ENCODE measurements at regions of chr7 and their contacts with region 1.

Region 1: DNA sequence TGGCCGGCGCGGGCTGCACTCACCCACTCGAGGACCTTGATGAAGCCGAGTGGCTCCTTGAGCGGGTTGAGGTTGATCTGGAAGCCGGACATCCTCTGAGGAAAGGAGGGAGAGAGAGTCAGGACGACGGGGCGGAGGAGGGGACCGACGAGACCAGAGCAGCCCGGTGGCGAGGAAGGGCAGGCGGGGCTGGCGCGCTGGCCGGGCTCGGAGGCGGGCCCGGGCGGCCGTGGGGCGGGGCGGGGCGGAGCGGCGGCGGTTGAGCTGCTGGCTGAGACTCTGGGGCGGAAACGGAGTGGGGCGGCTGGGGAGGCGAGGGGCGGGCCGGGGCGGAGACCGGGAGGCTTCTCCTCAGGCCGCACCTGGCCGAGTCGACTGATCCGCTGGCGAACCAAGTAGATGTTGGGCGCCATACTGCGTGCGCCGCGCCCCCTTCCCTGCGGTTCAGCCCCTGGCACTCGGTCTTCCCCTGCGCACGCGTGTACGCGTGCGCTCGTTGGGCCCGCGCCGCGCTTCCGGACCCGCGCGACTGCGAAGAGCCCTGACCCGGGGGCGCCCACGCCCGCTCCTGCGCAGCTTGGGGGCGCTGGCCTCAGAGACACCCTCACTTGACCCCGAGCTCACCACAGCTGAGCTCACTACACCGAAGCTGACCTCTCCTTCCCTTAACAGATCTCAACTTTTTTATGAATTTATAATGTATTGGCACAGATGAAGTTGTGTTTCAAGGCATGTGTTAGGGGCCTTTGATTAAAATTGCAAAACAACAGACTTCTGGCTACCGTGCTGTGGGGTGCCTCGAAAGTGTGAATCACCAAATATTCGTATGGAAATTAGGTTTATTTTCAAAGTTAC is at the start of gene SYPL1:
- DNase-seq: peak; percentile 86 to 97 (median 95)
- ATAC-seq: peak; percentile 88
- H3K4me3 ChIP-seq: peak within 1 kb of the TSS; percentile 64 to 69
- H3K4me3 Mint-ChIP-seq: peak within 1 kb of the TSS; percentile 89
- H3K27ac ChIP-seq: peak within 1 kb of the TSS; percentile 84 to 85
- H3K27ac Mint-ChIP-seq: peak within 1 kb of the TSS; percentile 96
- H3K4me1 ChIP-seq: peaks cover 71% of the 10 kb centered on the region
- H3K4me1 Mint-ChIP-seq: peaks cover 72% of the 10 kb centered on the region
- H3K27me3 ChIP-seq: no peaks in the 10 kb centered on the region
- H3K27me3 Mint-ChIP-seq: no peaks in the 10 kb centered on the region
- CTCF ChIP-seq: no peak
- total RNA-seq, gene SYPL1: 50.0 to 51.2 TPM

Region 2: DNA sequence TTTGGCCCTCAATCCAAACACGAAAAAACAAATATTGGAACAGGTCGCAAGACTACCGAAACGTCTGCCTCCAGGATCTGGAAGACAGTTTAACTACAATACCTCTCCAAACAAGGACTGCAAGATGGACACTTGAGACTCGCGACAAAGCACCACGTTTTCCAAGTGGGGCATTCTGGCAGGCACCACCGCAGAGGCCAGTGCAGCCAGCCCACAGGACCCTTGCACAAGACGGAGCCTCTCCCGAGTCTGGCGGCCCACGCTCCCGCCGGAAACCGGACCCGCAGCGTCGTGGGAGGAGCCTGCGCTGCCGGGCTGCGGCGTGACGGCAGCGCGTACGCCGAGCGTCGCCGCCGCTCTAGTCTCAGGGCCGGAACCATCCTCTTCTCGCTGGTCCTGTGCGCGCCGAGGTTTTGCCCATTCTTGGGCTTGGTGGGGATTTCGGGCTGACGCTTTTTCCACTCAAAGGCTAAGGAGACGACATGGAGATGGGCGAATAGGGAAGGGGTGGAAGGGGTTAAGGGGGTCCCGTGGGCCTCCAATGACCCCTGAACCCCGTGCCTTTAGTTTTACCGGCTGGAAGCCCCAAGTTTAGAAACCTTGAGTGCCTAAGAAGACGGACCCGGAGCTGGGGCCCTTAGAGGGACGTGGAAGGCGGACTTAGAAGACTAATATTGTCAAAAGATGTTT is 1904.5 kb before region 1 on chr7 and contains the start of gene ORC5:
- CTCF ChIA-PET with region 1: no interaction called
- POLR2A ChIA-PET with region 1: no interaction called
- intact Hi-C with region 1: loop called in 1 of 2 experiments (anchors 5 kb)
- DNase-seq: peak; percentile 41 to 90 (median 73)
- ATAC-seq: peak; percentile 95
- H3K4me3 ChIP-seq: peak within 1 kb of the TSS; percentile 85 to 87
- H3K4me3 Mint-ChIP-seq: peak within 1 kb of the TSS; percentile 92
- H3K27ac ChIP-seq: peak within 1 kb of the TSS; percentile 75 to 91
- H3K27ac Mint-ChIP-seq: peak within 1 kb of the TSS; percentile 95
- H3K4me1 ChIP-seq: peaks cover 17% of the 10 kb centered on the region
- H3K4me1 Mint-ChIP-seq: peaks cover 49% of the 10 kb centered on the region
- H3K27me3 ChIP-seq: no peaks in the 10 kb centered on the region
- H3K27me3 Mint-ChIP-seq: peaks cover 15% of the 10 kb centered on the region
- CTCF ChIP-seq: no peak
- total RNA-seq, gene ORC5: 9.7 to 11.3 TPM

Region 3: DNA sequence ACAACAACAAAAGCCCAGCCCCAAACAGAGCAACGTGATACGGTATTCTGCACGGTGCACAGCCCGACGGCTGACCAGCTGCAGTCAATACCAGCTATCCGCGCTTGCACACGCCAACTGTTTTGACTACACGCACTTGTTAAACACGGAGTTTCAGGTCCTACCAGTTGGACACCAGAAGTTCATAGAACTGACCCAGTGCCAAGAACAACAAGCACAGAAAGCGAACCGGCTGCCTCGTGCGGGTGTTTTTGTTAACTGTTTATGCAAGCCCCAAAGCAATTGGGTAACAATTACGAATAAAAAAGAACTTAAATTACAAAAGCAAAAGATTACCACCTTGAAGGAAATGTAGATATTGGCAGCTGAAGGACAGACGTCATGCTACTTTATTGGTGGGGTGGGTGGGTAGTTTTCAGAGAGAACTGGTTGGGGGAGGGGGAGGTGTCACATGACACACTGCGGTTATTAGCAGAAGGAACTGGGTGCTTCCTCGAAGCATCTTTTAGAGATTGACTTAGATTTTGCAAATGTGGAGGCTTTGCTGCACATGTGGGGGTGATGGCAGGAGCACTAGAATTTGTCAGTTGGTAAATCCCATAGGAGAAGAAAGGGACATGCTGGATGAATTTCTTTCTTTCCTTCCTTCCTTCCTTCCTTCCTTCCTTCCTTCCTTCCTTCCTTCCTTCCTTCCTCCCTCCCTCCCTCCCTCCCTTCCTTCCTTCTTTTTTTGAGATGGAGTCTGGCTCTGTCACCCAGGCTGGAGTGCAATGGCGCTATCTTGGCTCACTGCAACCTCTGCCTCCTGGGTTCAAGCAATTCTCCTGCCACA is 420.4 kb before region 1 on chr7:
- CTCF ChIA-PET with region 1: no interaction called
- POLR2A ChIA-PET with region 1: interaction called, 5 read pairs
- intact Hi-C with region 1: loop called in 1 of 2 experiments (anchors 5 kb)
- DNase-seq: peak; percentile 45 to 91 (median 71)
- ATAC-seq: peak; percentile 75
- H3K4me3 ChIP-seq: peak overlapping the region; percentile 69 to 72
- H3K4me3 Mint-ChIP-seq: peak overlapping the region; percentile 93
- H3K27ac ChIP-seq: peak overlapping the region; percentile 85 to 96
- H3K27ac Mint-ChIP-seq: peak overlapping the region; percentile 98
- H3K4me1 ChIP-seq: peaks cover 34% of the 10 kb centered on the region
- H3K4me1 Mint-ChIP-seq: peaks cover 64% of the 10 kb centered on the region
- H3K27me3 ChIP-seq: no peaks in the 10 kb centered on the region
- H3K27me3 Mint-ChIP-seq: no peaks in the 10 kb centered on the region
- CTCF ChIP-seq: no peak

Region 4: GRCh38 chr7:106071356-106071998 is 40.9 kb before region 1 on chr7:
- CTCF ChIA-PET with region 1: interaction called, 8 read pairs
- POLR2A ChIA-PET with region 1: interaction called, 50 read pairs
- intact Hi-C with region 1: loop called (anchors 2 to 5 kb)
- DNase-seq: peak in 8 of 9 experiments; percentile 22 to 81 (median 50)
- ATAC-seq: peak; percentile 92
- H3K4me3 ChIP-seq: peak overlapping the region; percentile 28 to 31
- H3K4me3 Mint-ChIP-seq: peak overlapping the region; percentile 78
- H3K27ac ChIP-seq: peak overlapping the region; percentile 64 to 83
- H3K27ac Mint-ChIP-seq: peak overlapping the region; percentile 97
- H3K4me1 ChIP-seq: peaks cover 37% of the 10 kb centered on the region
- H3K4me1 Mint-ChIP-seq: peaks cover 67% of the 10 kb centered on the region
- H3K27me3 ChIP-seq: no peaks in the 10 kb centered on the region
- H3K27me3 Mint-ChIP-seq: no peaks in the 10 kb centered on the region
- CTCF ChIP-seq: no peak

Region 5: GRCh38 chr7:106153891-106154449 is 41.6 kb after region 1 on chr7:
- CTCF ChIA-PET with region 1: interaction called, 22 read pairs
- POLR2A ChIA-PET with region 1: interaction called, 3 read pairs
- intact Hi-C with region 1: loop called in 1 of 2 experiments (anchors 2 kb)
- DNase-seq: peak; percentile 45 to 86 (median 72)
- ATAC-seq: peak; percentile 96
- H3K4me3 ChIP-seq: no peak overlapping the region
- H3K4me3 Mint-ChIP-seq: peak overlapping the region; percentile 48
- H3K27ac ChIP-seq: no peak overlapping the region
- H3K27ac Mint-ChIP-seq: no peak overlapping the region
- H3K4me1 ChIP-seq: no peaks in the 10 kb centered on the region
- H3K4me1 Mint-ChIP-seq: peaks cover 4% of the 10 kb centered on the region
- H3K27me3 ChIP-seq: no peaks in the 10 kb centered on the region
- H3K27me3 Mint-ChIP-seq: peaks cover 5% of the 10 kb centered on the region
- CTCF ChIP-seq: peak; percentile 93

Region 6: DNA sequence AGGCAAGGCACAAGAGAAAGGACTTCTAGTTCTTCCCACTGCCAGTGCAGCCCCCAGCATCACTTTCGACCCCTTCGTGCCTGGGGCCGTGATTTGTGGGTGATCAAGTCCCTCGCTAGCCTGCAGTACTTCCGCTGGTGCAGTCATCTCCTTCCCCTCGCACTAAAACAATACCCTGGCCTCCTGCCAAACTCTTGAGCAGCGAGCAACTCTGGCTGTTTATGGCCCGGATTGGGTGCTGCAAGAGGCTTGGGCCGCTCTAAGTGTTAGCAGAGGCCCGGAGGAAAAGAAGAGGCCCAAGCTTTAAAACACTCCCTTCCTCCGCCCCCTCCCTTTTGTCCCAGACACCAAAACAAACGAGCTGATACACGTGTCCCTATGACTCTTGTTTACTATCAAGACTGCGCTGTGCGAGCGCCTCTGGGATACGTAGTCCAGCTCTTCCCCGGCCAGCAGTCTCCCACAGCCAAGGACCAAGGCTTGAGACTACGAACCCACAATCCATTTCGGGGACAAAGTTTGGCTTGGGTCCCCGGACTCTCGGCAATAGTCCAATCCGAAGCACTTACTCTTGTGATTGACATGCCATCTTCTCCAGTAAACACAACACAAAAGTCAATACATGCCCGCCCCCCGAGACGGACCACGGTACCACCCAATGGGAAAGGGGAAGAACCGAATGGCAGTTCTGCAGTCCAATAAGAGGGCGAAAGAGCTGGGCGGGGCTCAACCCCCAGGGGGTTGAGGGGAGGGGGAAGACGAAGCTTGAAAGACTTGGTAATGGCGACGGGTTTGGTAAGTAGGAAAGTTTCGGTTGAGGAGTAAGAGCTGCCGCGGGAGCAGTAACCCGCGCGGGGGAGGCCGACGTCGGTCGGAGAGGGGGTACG is 1056.1 kb after region 1 on chr7 and contains the start of gene HBP1:
- CTCF ChIA-PET with region 1: no interaction called
- POLR2A ChIA-PET with region 1: interaction called, 9 read pairs
- intact Hi-C with region 1: loop called in 1 of 2 experiments (anchors 10 kb)
- DNase-seq: peak; percentile 95 to 100 (median 98)
- ATAC-seq: peak; percentile 77
- H3K4me3 ChIP-seq: peak within 1 kb of the TSS; percentile 85 to 93
- H3K4me3 Mint-ChIP-seq: peak within 1 kb of the TSS; percentile 94
- H3K27ac ChIP-seq: peak within 1 kb of the TSS; percentile 96 to 98
- H3K27ac Mint-ChIP-seq: peak within 1 kb of the TSS; percentile 99
- H3K4me1 ChIP-seq: peaks cover 36% of the 10 kb centered on the region
- H3K4me1 Mint-ChIP-seq: peaks cover 35% of the 10 kb centered on the region
- H3K27me3 ChIP-seq: no peaks in the 10 kb centered on the region
- H3K27me3 Mint-ChIP-seq: no peaks in the 10 kb centered on the region
- CTCF ChIP-seq: no peak
- total RNA-seq, gene HBP1: 233 to 251 TPM